Head of caudate nucleus (tissue), 42 donors: ENCODE measurements at regions of chr12 and their contacts with region 1.

Region 1: DNA sequence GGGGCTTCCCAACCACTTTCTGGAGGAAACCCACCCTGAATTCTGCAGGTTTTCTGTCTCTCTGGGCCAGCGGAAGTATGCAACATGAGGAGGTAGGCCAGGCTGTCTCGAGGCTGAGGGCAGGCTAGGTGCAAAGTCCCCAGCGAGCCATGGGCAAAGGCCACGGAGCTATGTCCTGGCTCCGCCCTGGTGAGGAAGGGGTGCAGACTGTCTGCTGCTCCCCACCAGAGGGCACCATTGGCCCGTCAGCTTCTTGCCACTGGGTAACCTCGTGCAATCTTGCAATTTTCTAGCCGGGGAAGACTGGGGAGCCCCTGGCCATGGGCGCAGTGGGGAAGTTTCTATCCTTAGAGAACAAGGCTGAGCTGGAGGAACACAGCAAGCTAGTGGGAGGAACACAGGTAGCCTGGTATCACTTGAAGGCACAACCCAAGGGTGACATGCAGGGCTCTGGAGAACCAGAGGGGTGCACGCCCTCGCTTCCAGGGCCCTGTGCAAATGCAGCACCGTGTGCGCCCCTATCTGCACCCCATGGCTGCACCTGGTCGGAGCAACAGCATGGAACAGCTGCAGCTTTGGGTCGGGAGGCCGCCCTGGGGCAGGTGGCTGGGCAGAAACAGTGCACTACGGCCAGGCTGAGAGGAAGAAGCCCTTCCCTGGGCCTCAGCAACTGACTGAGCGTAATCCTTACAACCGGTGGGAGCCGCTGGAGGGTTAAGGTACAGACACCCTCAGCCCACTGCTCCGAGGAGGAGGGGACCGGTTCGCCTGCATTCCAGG is 27.6 kb upstream of the RPLP0 start:
- DNase-seq: peak; percentile 75 to 95 (median 89)

Region 2: GRCh38 chr12:120265473-120266179 is 37.1 kb after region 1 on chr12 and contains the start of gene PXN:
- intact Hi-C with region 1: loop called (anchors 2 kb)
- DNase-seq: peak; percentile 39 to 95 (median 86)